Heart left ventricle (tissue), 16 donors: ENCODE measurements at regions of chr6 and their contacts with region 1.

Region 1: DNA sequence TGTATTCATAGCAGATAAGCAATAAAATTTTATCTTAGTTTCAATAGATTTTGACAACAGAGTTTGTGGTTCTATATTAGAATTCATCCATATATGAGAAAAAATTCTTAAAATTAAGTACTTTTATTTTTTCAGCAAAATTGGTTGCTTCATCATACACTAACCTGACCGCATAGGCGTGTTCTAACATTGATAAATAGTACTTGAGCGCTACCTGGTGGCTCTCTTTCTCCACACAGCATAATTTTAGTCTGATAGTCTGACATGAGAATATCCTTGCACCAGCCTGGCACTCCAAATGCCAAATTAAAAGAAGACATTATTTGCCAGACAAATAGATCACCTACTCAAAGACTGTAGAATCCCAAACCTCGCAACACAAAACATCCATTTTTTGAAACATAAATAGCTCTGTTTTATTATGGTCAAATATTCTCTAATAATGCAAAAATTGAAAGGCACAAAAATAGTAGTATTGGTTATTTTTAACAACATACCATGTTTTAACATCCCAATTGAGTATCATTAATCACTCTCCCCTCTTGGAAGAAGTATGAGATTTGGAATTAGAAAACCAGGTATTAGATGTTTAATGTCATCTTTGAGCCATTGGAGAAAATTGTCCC is 33.0 kb upstream of the FILIP1 start:
- DNase-seq: peak in 3 of 5 donors; percentile 45 to 62 (median 51)
- ATAC-seq: peak; percentile 49 to 92 (median 88)
- H3K4me3 ChIP-seq: no peak overlapping the region
- H3K27ac ChIP-seq: no peak overlapping the region
- H3K4me1 ChIP-seq: peaks cover 0 to 9% (median 0%) of the 10 kb centered on the region in 12 donors
- H3K27me3 ChIP-seq: no peaks in the 10 kb centered on the region
- CTCF ChIP-seq: peak; percentile 55 to 81 (median 76)
- POLR2A ChIP-seq: no peak

Region 2: GRCh38 chr6:75266716-75267291 is 259.8 kb before region 1 on chr6:
- intact Hi-C with region 1: loop called (anchors 1 to 5 kb)
- DNase-seq: no peak
- ATAC-seq: peak in 3 of 4 donors; percentile 68 to 70 (median 70)
- H3K4me3 ChIP-seq: no peak overlapping the region
- H3K27ac ChIP-seq: no peak overlapping the region
- H3K4me1 ChIP-seq: peaks cover 0 to 48% (median 21%) of the 10 kb centered on the region in 12 donors
- H3K27me3 ChIP-seq: no peaks in the 10 kb centered on the region
- CTCF ChIP-seq: peak; percentile 69 to 93 (median 86)
- POLR2A ChIP-seq: no peak

Region 3: DNA sequence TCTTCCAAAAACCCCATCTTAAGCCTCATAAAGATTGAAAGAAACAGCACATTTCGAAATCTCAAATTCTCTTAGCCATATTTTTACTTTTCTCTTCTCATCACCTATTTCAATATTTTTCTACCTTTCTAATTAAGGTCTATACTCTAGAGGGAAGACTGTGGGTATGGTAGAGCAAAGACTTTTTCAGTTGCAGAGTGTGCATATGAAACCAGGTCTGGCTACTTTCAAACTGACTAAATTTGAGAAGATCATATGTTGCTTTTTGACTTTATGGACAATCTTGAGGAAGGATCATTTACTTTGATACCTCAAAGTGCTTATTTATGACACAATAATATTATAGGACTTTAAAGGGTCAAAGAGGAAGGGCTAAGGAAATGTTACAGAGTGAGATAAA is 53.7 kb before region 1 on chr6:
- intact Hi-C with region 1: no loop called
- DNase-seq: no peak
- ATAC-seq: no peak
- H3K4me3 ChIP-seq: no peak overlapping the region
- H3K27ac ChIP-seq: no peak overlapping the region
- H3K4me1 ChIP-seq: peaks cover 0 to 48% (median 14%) of the 10 kb centered on the region in 12 donors
- H3K27me3 ChIP-seq: no peaks in the 10 kb centered on the region
- CTCF ChIP-seq: no peak
- POLR2A ChIP-seq: no peak